ENCODE measurements at regions of chr11 and their contacts with region 1.

Region 1: GRCh38 chr11:727859-728748 is 19.2 kb upstream of the TALDO1 start:
- DNase-seq: peak; percentile 73
- ATAC-seq: peak; percentile 80
- H3K4me3 ChIP-seq: peak overlapping the region; percentile 19 to 70 (median 43); a peak in 3 of 6 replicates
- H3K27ac ChIP-seq: peak overlapping the region; percentile 62
- H3K4me1 ChIP-seq: peaks cover 38% of the 10 kb centered on the region
- H3K27me3 ChIP-seq: peaks cover 0 to 3% of the 10 kb centered on the region in 2 experiments; a peak in 1 of 5 replicates
- CTCF ChIP-seq: peak; percentile 99
- EP300 ChIP-seq: no peak
- POLR2A ChIP-seq: peak; percentile 33 to 45
- RAD21 ChIP-seq: peak; percentile 95

Region 2: GRCh38 chr11:587978-588380 is 140.1 kb before region 1 on chr11:
- CTCF ChIA-PET with region 1: no interaction called
- POLR2A ChIA-PET with region 1: no interaction called
- in situ Hi-C with region 1: no loop called
- intact Hi-C with region 1: no loop called
- DNase-seq: peak; percentile 96
- ATAC-seq: peak; percentile 98
- H3K4me3 ChIP-seq: no peak overlapping the region
- H3K27ac ChIP-seq: peak overlapping the region; percentile 70
- H3K4me1 ChIP-seq: peaks cover 54% of the 10 kb centered on the region
- H3K27me3 ChIP-seq: no peaks in the 10 kb centered on the region
- CTCF ChIP-seq: no peak; the same call in 1 of the 2 replicates
- EP300 ChIP-seq: peak in 1 of 2 experiments; percentile 53; a peak in 2 of 4 replicates
- POLR2A ChIP-seq: 0 out of 4 replicates have a peak, but pooled peaks of 1 of the 2 experiments have one; percentile 21
- RAD21 ChIP-seq: peak; percentile 37; the same call in 1 of the 2 replicates

Region 3: GRCh38 chr11:655036-655726 is 72.9 kb before region 1 on chr11:
- CTCF ChIA-PET with region 1: no interaction called
- POLR2A ChIA-PET with region 1: no interaction called
- in situ Hi-C with region 1: loop called (anchors 5 kb)
- intact Hi-C with region 1: no loop called
- DNase-seq: peak; percentile 90
- ATAC-seq: peak; percentile 92
- H3K4me3 ChIP-seq: peak overlapping the region in 1 of 3 experiments; percentile 39; a peak in 1 of 6 replicates
- H3K27ac ChIP-seq: peak overlapping the region; percentile 78
- H3K4me1 ChIP-seq: peaks cover 47% of the 10 kb centered on the region
- H3K27me3 ChIP-seq: no peaks in the 10 kb centered on the region
- CTCF ChIP-seq: no peak
- EP300 ChIP-seq: no peak
- POLR2A ChIP-seq: peak in 1 of 2 experiments; percentile 40; a peak in 1 of 4 replicates
- RAD21 ChIP-seq: peak; percentile 23; the same call in 1 of the 2 replicates

Region 4: DNA sequence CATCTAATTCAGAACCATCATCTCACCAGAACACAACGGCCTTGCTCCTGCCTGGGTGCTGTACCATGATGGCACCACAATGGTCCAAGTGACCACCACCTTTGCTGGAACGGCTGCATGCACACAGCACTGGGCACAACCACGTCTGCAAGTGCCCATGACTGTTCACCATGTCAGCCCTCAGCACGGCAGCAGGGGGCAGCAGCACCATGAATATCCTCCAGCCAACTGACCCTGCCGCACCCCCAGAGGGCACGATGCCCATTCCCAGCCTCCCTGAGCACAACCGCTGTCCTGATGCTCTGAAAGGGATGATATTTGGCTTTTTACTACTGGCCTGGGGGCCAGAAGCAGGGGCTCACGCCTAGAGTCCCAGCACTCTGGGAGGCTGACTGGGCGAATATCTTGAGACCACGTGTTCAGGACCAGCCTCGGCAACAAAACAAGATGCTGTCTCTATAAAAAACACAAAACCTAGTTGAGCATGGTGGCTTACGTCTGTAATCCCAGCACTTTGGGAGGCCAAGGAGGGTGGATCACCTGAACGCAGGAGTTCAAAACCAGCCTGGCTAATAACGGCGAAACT is 65.3 kb before region 1 on chr11:
- CTCF ChIA-PET with region 1: interaction called, 10 read pairs
- POLR2A ChIA-PET with region 1: no interaction called
- in situ Hi-C with region 1: loop called (anchors 5 kb)
- intact Hi-C with region 1: loop called (anchors 1 kb)
- DNase-seq: peak; percentile 39
- ATAC-seq: peak; percentile 84
- H3K4me3 ChIP-seq: no peak overlapping the region
- H3K27ac ChIP-seq: no peak overlapping the region
- H3K4me1 ChIP-seq: peaks cover 10% of the 10 kb centered on the region
- H3K27me3 ChIP-seq: no peaks in the 10 kb centered on the region
- CTCF ChIP-seq: peak; percentile 91
- EP300 ChIP-seq: no peak
- POLR2A ChIP-seq: no peak
- RAD21 ChIP-seq: peak; percentile 80

Region 5: GRCh38 chr11:695538-696248 is 32.4 kb before region 1 on chr11 and contains the start of gene TMEM80:
- CTCF ChIA-PET with region 1: interaction called, 20 read pairs
- POLR2A ChIA-PET with region 1: interaction called, 61 read pairs
- in situ Hi-C with region 1: no loop called
- intact Hi-C with region 1: loop called (anchors 1 kb)
- DNase-seq: peak; percentile 93
- ATAC-seq: peak; percentile 84
- H3K4me3 ChIP-seq: peak within 1 kb of the TSS; percentile 86 to 87 (median 87)
- H3K27ac ChIP-seq: peak within 1 kb of the TSS; percentile 99
- H3K4me1 ChIP-seq: peaks cover 61% of the 10 kb centered on the region
- H3K27me3 ChIP-seq: no peaks in the 10 kb centered on the region; a peak in 1 of 5 replicates
- CTCF ChIP-seq: no peak; the same call in 1 of the 2 replicates
- EP300 ChIP-seq: no peak
- POLR2A ChIP-seq: peak in 1 of 2 experiments; percentile 32; a peak in 2 of 4 replicates
- RAD21 ChIP-seq: peak; percentile 43
- total RNA-seq, gene TMEM80: 2.7 and 5.6 TPM in 2 replicates

Region 6: DNA sequence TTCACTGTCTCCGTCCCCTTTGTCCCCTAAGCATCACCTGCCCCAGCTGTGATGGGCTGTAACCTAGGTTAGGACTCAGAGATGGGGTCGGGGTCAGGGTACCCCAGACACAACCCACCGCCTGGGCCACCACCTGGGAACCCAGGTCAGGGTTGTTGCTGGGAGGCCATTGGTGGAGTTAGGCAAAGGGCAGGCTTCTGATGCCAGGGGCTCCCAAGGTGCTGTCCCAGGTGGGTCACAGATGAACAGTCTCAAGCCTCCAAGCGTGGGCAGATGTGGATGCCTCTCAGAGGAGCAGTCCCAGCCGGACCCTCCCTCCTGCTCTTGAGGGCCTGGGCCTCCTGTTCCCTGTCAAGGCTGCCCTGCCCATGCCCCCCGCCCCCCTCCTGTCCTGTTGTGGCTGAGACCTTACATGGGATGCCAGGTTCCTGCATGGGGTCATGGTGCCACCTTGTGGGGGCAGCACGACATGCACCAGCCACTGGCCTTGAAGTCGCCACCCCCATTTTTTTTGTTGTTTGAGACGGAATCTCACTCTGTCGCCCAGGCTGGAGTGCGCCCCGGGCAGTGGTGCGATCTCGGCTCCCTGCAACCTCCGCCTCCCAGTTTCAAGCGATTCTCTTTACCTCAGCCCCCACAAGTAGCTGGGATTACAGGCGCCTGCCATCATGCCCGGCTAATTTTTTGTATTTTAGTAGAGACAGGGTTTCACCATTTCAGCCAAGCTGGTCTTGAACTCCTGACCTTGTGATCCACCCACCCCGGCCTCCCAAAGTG is 37.1 kb after region 1 on chr11:
- CTCF ChIA-PET with region 1: interaction called, 11 read pairs
- POLR2A ChIA-PET with region 1: no interaction called
- in situ Hi-C with region 1: no loop called
- intact Hi-C with region 1: loop called (anchors 2 kb)
- DNase-seq: peak; percentile 35
- ATAC-seq: peak; percentile 51
- H3K4me3 ChIP-seq: no peak overlapping the region
- H3K27ac ChIP-seq: no peak overlapping the region
- H3K4me1 ChIP-seq: peaks cover 7% of the 10 kb centered on the region
- H3K27me3 ChIP-seq: no peaks in the 10 kb centered on the region
- CTCF ChIP-seq: peak; percentile 86
- EP300 ChIP-seq: no peak
- POLR2A ChIP-seq: no peak; a peak in 1 of 4 replicates
- RAD21 ChIP-seq: peak; percentile 73